Naive thymus-derived CD4-positive, alpha-beta T cell (primary cell): ENCODE measurements at regions of chr13 and their contacts with region 1.

Region 1: DNA sequence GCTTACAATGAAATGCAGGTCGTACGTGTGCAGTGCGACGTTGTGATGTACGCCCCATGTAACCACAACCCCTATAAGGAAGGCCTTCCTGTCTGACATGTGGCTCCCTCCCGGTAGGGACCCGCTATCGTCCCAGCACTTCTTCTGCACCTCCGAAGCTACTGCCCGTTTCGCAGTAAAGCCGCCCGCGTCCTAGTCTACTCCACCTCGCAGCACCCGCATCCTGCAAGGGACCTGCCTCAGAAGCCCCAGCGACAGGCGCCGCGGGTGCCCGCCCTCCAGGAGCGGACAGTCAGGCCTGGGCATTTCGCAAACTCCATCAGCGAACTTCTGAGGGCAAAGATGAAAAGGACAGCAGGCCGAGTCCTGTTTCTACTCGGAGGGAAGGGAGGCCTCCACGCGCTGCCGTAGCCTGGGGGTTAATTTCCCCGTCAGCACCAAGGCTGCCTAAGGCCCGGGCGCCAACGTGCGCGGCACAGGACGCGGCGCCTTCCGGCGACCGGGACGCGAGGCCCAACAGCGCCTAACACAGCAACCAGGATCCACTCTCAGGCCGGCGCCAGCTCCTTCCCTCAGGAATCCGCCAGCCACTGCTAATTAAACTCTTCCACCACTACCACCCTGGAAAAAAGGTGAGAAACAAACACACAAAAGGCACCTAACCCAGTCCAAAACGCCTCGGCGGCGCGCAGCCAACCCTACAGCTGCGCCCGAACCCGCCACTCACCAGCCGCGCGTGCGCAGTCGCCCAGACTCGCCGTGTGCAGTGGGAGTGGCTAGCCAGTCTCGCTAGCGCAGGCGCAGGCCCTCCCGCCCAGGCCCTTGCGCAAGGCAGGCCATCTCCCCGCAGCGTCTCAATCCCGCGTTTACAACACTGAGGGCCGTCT is at the start of gene EEF1AKMT1:
- DNase-seq: peak; percentile 88 to 98 (median 94)
- ATAC-seq: peak; percentile 93
- H3K4me3 ChIP-seq: peak within 1 kb of the TSS; percentile 90
- H3K4me3 Mint-ChIP-seq: peak within 1 kb of the TSS; percentile 85 to 99 (median 94)
- H3K27ac ChIP-seq: peak within 1 kb of the TSS; percentile 93
- H3K27ac Mint-ChIP-seq: peak within 1 kb of the TSS; percentile 94 to 100 (median 99)
- H3K4me1 ChIP-seq: peaks cover 9 to 16% of the 10 kb centered on the region in 2 donors
- H3K4me1 Mint-ChIP-seq: peaks cover 19 to 60% (median 53%) of the 10 kb centered on the region in 7 donors
- H3K27me3 ChIP-seq: no peaks in the 10 kb centered on the region
- H3K27me3 Mint-ChIP-seq: no peaks in the 10 kb centered on the region
- total RNA-seq, gene EEF1AKMT1: 4.2 to 11.2 (median 8.5) TPM

Region 2: DNA sequence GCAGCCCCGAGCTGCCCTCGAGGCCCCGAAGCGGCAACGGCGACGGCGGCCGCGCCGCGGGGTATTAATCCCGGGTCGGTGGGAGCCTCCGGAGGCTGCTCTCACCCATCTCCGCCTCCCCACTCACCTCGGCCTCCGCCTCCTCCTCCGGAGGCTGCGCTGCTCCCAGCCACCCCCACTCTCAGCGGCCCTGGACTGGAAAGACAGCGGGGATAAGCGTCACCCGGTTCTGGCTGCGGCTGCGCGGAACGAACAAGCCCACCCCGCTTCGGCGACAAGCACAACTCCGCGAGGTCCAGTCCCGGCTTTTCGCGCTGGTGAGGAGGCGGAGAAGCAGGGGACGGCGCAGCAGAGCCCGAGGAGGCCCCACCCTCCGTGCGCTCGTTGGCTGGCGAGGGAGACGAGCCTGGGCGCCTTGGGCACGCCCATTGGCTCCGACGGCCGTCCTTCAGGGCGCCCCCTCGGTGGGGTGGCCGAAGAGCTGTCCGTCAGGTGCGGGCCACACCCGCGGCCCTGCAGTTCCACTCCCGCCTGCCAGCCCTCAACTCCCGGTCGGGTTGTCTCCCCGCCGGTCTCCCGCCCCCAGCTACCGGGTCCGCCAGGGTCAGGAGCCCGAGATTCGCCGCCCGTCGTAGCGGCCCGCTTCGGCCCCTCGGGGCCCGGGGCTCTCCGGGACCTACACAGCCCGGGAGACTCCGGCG is 910.0 kb before region 1 on chr13 and contains the start of gene ZMYM5:
- CTCF ChIA-PET with region 1: no interaction called
- POLR2A ChIA-PET with region 1: no interaction called
- intact Hi-C with region 1: loop called in 1 of 2 experiments (anchors 2 kb)
- DNase-seq: peak; percentile 87 to 96 (median 90)
- ATAC-seq: peak; percentile 89
- H3K4me3 ChIP-seq: peak within 1 kb of the TSS; percentile 80
- H3K4me3 Mint-ChIP-seq: peak within 1 kb of the TSS; percentile 85 to 98 (median 97)
- H3K27ac ChIP-seq: peak within 1 kb of the TSS; percentile 84
- H3K27ac Mint-ChIP-seq: peak within 1 kb of the TSS; percentile 90 to 98 (median 97)
- H3K4me1 ChIP-seq: peaks cover 22 to 23% of the 10 kb centered on the region in 2 donors
- H3K4me1 Mint-ChIP-seq: peaks cover 12 to 43% (median 37%) of the 10 kb centered on the region in 7 donors
- H3K27me3 ChIP-seq: no peaks in the 10 kb centered on the region
- H3K27me3 Mint-ChIP-seq: no peaks in the 10 kb centered on the region
- total RNA-seq, gene ZMYM5: 17.5 to 25.6 (median 24.7) TPM

Region 3: GRCh38 chr13:20387441-20387971 is 385.9 kb before region 1 on chr13:
- CTCF ChIA-PET with region 1: no interaction called
- POLR2A ChIA-PET with region 1: no interaction called
- intact Hi-C with region 1: no loop called
- DNase-seq: no peak
- ATAC-seq: no peak
- H3K4me3 ChIP-seq: no peak overlapping the region
- H3K4me3 Mint-ChIP-seq: peak overlapping the region in 1 of 10 donors; percentile 48
- H3K27ac ChIP-seq: no peak overlapping the region
- H3K27ac Mint-ChIP-seq: peak overlapping the region in 4 of 9 donors; percentile 10 to 80 (median 35)
- H3K4me1 ChIP-seq: no peaks in the 10 kb centered on the region
- H3K4me1 Mint-ChIP-seq: peaks cover 0 to 18% (median 4%) of the 10 kb centered on the region in 7 donors
- H3K27me3 ChIP-seq: no peaks in the 10 kb centered on the region
- H3K27me3 Mint-ChIP-seq: peaks cover 0 to 9% (median 0%) of the 10 kb centered on the region in 5 donors

Region 4: GRCh38 chr13:20525690-20526544 is 247.5 kb before region 1 on chr13 and contains the start of gene CRYL1:
- CTCF ChIA-PET with region 1: no interaction called
- POLR2A ChIA-PET with region 1: interaction called, 5 read pairs
- intact Hi-C with region 1: loop called (anchors 1 to 2 kb)
- DNase-seq: peak; percentile 56 to 78 (median 68)
- ATAC-seq: peak; percentile 92
- H3K4me3 ChIP-seq: peak within 1 kb of the TSS; percentile 68
- H3K4me3 Mint-ChIP-seq: peak within 1 kb of the TSS; percentile 76 to 94 (median 87)
- H3K27ac ChIP-seq: peak within 1 kb of the TSS; percentile 65
- H3K27ac Mint-ChIP-seq: peak within 1 kb of the TSS; percentile 66 to 96 (median 88)
- H3K4me1 ChIP-seq: peaks cover 0 to 7% of the 10 kb centered on the region in 2 donors
- H3K4me1 Mint-ChIP-seq: peaks cover 11 to 40% (median 25%) of the 10 kb centered on the region in 7 donors
- H3K27me3 ChIP-seq: no peaks in the 10 kb centered on the region
- H3K27me3 Mint-ChIP-seq: peaks cover 0 to 9% (median 0%) of the 10 kb centered on the region in 5 donors
- total RNA-seq, gene CRYL1: 12.3 to 21.2 (median 16.3) TPM

Region 5: DNA sequence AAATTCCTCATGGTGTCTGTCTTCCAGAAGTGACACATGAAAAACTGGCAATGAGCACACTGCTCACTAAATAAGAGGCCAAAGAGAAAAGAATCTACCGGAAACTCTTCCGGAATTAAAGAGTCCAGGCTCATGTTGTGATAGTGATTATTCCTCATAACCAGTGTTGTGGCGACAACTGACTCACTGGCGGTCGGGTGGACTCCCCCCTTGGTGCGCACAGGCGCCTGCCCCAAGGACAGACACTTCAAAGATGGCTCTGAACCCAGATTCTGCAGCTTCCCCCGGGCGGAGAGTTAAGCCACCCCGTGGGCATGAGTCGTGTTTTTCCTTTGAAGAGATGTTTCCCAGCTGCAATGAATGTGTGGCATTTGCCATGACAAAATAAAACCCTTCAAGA is 59.7 kb before region 1 on chr13:
- CTCF ChIA-PET with region 1: no interaction called
- POLR2A ChIA-PET with region 1: no interaction called
- intact Hi-C with region 1: loop called in 1 of 2 experiments (anchors 2 kb)
- DNase-seq: no peak
- ATAC-seq: no peak
- H3K4me3 ChIP-seq: no peak overlapping the region
- H3K4me3 Mint-ChIP-seq: no peak overlapping the region
- H3K27ac ChIP-seq: no peak overlapping the region
- H3K27ac Mint-ChIP-seq: no peak overlapping the region
- H3K4me1 ChIP-seq: no peaks in the 10 kb centered on the region
- H3K4me1 Mint-ChIP-seq: peaks cover 5 to 13% (median 8%) of the 10 kb centered on the region in 7 donors
- H3K27me3 ChIP-seq: no peaks in the 10 kb centered on the region
- H3K27me3 Mint-ChIP-seq: peaks cover 0 to 7% (median 6%) of the 10 kb centered on the region in 5 donors

Region 6: DNA sequence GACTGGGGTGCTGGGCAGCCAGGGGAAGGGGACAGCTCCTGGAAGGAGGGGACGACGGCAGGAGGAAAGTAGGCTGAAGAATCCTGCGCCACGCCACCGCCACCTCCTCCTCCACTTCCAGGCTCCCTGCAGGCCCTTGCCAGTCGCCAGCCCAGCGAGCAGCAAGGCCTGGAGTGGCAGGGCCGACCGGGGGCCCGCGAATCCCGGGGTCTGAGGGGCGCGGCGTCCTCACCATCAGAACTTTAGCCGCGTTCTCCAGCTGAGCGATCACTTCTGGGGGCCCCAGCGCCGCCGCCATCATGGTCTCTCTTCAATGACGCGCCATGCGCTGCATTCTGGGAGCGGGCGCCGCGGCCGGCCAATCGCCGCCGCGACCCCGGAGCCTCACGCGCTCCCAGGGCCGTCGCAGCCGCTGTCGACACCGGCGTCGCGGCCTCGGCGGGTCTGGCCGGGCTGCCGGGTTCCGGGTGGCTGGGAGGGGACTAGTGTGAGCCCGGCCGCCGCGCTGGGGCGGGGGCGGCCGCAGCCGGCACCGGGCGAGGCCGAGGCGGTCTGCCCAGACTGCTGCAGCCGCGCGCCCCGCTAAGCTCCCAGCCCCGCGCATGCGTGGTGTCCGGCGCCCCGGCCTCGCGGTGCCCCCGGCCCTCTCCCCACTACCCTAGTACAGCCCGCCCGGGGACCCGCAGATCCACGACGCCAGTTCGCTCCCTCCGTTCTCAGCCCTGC is 129.2 kb after region 1 on chr13 and contains the start of gene XPO4:
- CTCF ChIA-PET with region 1: no interaction called
- POLR2A ChIA-PET with region 1: interaction called, 9 read pairs
- intact Hi-C with region 1: loop called (anchors 1 kb)
- DNase-seq: peak; percentile 68 to 85 (median 77)
- ATAC-seq: peak; percentile 97
- H3K4me3 ChIP-seq: peak within 1 kb of the TSS; percentile 98
- H3K4me3 Mint-ChIP-seq: peak within 1 kb of the TSS; percentile 93 to 98 (median 96)
- H3K27ac ChIP-seq: peak within 1 kb of the TSS; percentile 83
- H3K27ac Mint-ChIP-seq: peak within 1 kb of the TSS; percentile 89 to 98 (median 95)
- H3K4me1 ChIP-seq: peaks cover 10 to 21% of the 10 kb centered on the region in 2 donors
- H3K4me1 Mint-ChIP-seq: peaks cover 15 to 41% (median 32%) of the 10 kb centered on the region in 7 donors
- H3K27me3 ChIP-seq: no peaks in the 10 kb centered on the region
- H3K27me3 Mint-ChIP-seq: peaks cover 0 to 3% (median 0%) of the 10 kb centered on the region in 5 donors
- total RNA-seq, gene XPO4: 20.9 to 26.5 (median 23.5) TPM

Region 7: DNA sequence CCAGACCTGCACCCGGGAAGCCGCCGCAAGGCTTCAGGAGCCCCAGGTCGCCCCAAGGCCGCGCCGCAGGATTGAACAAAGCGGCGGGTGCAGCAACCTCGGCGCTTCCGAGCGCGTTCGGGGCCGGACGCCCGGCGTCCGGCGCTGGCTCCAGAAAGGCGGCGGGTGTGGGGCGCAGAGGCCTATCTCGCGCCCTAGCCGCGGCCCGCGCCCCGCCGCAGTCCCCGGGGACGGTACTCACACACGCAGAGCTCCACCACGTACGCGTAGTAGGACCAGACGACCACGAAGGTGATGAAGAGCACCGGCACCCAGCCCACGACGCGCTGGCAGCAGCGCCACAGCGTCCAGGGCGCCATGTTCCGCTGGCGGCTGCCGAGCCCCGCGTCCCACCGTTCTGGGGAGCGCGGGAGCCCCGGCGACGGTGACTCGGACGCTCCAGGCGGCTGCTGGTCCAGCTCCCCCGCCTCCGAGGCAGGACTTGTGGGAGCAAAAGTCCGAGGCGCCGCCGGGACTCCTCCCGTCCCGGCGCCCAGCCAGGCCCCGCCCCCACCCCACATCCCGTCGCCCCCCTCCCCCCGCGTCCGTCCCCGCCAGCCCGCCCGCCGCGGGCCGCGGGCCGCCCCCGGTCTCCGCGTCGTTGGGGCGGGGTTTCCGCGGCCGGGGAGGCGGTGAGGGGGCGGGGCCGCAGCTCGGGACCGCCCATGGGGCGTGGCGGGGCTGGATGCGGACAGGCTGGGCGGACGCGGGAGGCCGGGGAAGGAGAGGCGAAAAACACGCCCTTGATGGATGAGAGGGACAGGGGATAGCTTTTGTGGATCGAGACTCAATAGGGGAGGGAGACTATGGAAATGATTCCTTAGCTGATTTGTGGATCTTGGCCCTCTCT is 685.6 kb after region 1 on chr13 and contains the start of gene ZDHHC20:
- CTCF ChIA-PET with region 1: no interaction called
- POLR2A ChIA-PET with region 1: no interaction called
- intact Hi-C with region 1: loop called (anchors 2 to 5 kb)
- DNase-seq: peak; percentile 75 to 99 (median 88)
- ATAC-seq: peak; percentile 98
- H3K4me3 ChIP-seq: peak within 1 kb of the TSS; percentile 90
- H3K4me3 Mint-ChIP-seq: peak within 1 kb of the TSS; percentile 91 to 97 (median 94)
- H3K27ac ChIP-seq: peak within 1 kb of the TSS; percentile 97
- H3K27ac Mint-ChIP-seq: peak within 1 kb of the TSS; percentile 74 to 98 (median 94)
- H3K4me1 ChIP-seq: peaks cover 9 to 19% of the 10 kb centered on the region in 2 donors
- H3K4me1 Mint-ChIP-seq: peaks cover 27 to 55% (median 42%) of the 10 kb centered on the region in 7 donors
- H3K27me3 ChIP-seq: no peaks in the 10 kb centered on the region
- H3K27me3 Mint-ChIP-seq: peaks cover 0 to 7% (median 0%) of the 10 kb centered on the region in 5 donors
- total RNA-seq, gene ZDHHC20: 60.8 to 89.9 (median 71.7) TPM